ENCODE measurements at regions of chr6 and their contacts with region 1.

Region 1: DNA sequence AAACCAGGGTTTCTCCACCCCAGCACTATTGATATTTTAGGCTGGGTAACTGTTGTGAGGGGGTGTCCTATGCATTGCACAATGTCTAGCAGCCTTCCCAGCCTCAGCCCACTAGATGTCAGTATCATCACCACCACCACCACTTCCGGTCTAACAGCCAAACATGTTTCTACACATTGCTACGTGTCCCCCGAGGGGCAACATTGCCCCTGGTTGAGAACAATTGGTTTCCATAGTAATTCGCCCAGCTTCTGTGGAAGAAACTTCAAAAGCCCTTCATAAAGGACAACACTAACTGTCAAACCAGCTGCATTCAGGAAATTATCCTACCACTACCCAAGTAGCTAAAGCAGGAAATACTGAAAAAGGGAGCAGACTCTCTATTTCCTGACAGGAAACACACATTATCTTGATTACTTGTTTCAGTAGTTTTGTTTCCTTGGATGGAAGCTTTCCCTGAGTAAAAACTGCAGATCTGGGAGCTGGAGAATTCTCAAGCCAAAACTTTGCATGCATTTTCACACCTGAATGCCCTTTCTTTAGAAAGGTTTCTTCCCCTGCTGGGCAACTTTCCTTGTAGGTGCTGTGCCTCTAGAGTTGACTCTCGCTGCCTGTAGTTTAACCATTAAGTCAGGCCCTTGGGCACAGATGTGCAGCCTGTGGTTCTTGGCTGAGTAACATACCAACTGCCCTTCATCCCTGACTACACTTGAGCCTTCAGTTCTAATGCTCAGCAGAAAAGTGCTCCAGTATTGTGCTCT is 23.6 kb downstream of the PKHD1 start:
- H3K4me3 ChIP-seq: no peak overlapping the region
- H3K27ac ChIP-seq: no peak overlapping the region
- H3K4me1 ChIP-seq: no peaks in the 10 kb centered on the region; the same call in 1 of the 2 replicates
- CTCF ChIP-seq: peak; percentile 48

Region 2: GRCh38 chr6:52049252-52050050 is 14.3 kb before region 1 on chr6:
- CTCF ChIA-PET with region 1: interaction called, 44 read pairs
- POLR2A ChIA-PET with region 1: no interaction called
- H3K4me3 ChIP-seq: no peak overlapping the region
- H3K27ac ChIP-seq: no peak overlapping the region
- H3K4me1 ChIP-seq: 0 out of 2 replicates have a peak, but pooled peaks cover 2% of the 10 kb centered on the region
- CTCF ChIP-seq: peak; percentile 24; the same call in 1 of the 2 replicates

Region 3: DNA sequence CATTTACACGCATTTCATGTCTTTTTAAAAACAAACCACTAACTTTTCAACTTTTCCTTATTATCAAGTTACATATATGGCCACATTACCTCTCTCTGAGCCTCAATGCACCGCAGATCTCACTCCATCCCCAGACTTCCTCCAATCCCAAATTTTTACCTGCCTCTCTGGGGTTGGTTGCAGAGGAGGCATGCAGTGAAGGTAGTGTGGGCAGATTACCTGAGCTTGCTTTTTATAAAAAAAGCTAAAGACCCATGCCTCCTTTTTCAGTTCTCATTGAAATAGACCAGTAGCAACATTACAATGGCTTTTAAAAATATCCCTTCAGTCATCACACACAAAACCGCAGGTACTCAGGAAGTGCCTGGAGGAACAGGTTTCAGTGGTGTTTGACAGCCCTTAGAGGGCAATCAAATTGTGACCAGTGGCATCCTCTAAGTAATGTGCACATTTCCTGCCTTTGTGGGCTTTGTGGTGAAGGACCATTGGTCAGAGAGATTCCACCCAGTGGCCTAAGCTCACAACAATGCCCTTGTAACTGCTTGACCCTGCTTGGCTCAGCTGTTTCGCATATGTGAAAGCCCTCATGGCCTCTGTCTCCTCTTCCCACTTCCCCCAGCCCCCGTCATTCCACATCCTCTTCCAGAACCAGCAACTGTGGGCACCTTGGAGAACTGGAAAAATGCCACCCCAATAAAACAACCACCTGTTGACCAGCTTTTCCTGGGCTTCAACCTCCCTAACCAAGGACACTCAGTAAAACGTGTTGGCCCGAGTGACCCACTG is 92.2 kb after region 1 on chr6:
- CTCF ChIA-PET with region 1: interaction called, 10 read pairs
- POLR2A ChIA-PET with region 1: no interaction called
- H3K4me3 ChIP-seq: no peak overlapping the region
- H3K27ac ChIP-seq: no peak overlapping the region
- H3K4me1 ChIP-seq: peaks cover 5% of the 10 kb centered on the region; the same call in 1 of the 2 replicates
- CTCF ChIP-seq: no peak